ENCODE measurements at regions of chr11 and their contacts with region 1.

Region 1: DNA sequence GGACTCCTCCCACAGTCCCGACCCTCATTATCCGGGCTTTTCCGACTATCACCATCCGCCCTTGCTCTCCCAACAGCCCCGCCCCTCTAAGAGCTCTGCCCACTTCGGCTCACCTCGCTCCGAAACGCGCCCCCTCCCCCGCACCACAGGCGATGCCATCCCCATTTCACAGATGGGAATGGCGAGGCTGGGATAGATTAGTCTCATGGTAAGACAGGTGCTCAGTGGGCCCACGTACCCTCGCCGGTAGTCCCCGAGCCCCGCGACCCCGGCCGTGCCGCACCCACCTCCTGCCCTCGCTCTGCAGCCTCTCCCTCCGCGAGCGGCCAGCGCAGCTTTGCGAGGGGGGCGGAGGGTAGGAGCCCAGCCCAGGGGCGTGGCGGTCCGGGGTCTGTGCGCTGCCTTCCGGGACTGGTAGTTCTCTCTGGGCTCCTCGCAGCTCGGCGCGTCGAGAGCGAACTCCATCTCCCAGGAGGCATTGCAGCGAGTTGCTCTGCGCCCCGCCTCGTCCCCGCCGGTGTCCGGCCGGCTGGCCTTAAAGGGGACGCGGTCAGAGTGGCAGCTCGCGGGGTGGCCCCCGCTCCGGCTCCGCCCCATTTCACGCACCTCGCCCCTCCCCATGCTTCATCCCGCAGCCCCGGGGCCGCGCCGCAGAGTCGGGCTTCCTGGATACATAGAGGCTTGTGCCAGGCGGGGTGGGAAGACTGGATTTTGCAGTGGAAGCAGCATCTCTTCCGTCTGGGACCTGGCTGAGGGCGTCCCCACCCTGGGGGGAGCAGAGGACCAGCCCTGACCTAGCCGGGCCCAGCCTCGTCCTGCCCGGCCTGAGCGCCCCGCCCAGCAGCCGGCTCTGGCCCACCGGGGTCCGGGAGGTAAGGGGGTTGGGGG is at the starts of genes KCTD21 and USP35:
- DNase-seq: peak; percentile 96 to 98 (median 96)
- ATAC-seq: peak; percentile 98
- H3K4me3 ChIP-seq: peak within 1 kb of the TSS; percentile 73
- H3K27ac ChIP-seq: peak within 1 kb of the TSS; percentile 41
- H3K4me1 ChIP-seq: peaks cover 41 to 44% of the 10 kb centered on the region in 2 experiments
- H3K27me3 ChIP-seq: no peaks in the 10 kb centered on the region
- CTCF ChIP-seq: no peak
- EP300 ChIP-seq: 0 out of 2 replicates have a peak, but pooled peaks have one; percentile 0
- POLR2A ChIP-seq: peak; percentile 62; the same call in 1 of the 2 replicates
- RAD21 ChIP-seq: no peak; a peak in 1 of 4 replicates
- polyA plus RNA-seq, gene KCTD21: 0.34 to 0.80 TPM
- polyA plus RNA-seq, gene USP35: 0.01 to 0.07 TPM

Region 2: GRCh38 chr11:78127401-78127800 is 61.1 kb before region 1 on chr11:
- CTCF ChIA-PET with region 1: no interaction called
- POLR2A ChIA-PET with region 1: no interaction called
- in situ Hi-C with region 1: no loop called
- intact Hi-C with region 1: no loop called
- DNase-seq: no peak
- ATAC-seq: peak; percentile 55
- H3K4me3 ChIP-seq: no peak overlapping the region
- H3K27ac ChIP-seq: no peak overlapping the region
- H3K4me1 ChIP-seq: no peaks in the 10 kb centered on the region
- H3K27me3 ChIP-seq: no peaks in the 10 kb centered on the region
- CTCF ChIP-seq: no peak
- EP300 ChIP-seq: no peak
- POLR2A ChIP-seq: no peak
- RAD21 ChIP-seq: no peak

Region 3: GRCh38 chr11:78149646-78150045 is 38.9 kb before region 1 on chr11:
- CTCF ChIA-PET with region 1: no interaction called
- POLR2A ChIA-PET with region 1: no interaction called
- in situ Hi-C with region 1: no loop called
- intact Hi-C with region 1: loop called (anchors 5 kb)
- DNase-seq: no peak
- ATAC-seq: peak; percentile 50; the same call in 2 of the 3 replicates
- H3K4me3 ChIP-seq: no peak overlapping the region
- H3K27ac ChIP-seq: no peak overlapping the region
- H3K4me1 ChIP-seq: no peaks in the 10 kb centered on the region
- H3K27me3 ChIP-seq: no peaks in the 10 kb centered on the region
- CTCF ChIP-seq: peak in 1 of 3 experiments; percentile 38; a peak in 2 of 6 replicates
- EP300 ChIP-seq: no peak
- POLR2A ChIP-seq: no peak
- RAD21 ChIP-seq: peak in 1 of 2 experiments; percentile 52; a peak in 2 of 4 replicates

Measured in K562 (cell line).